ENCODE measurements at regions of chr18 and their contacts with region 1.

Region 1: GRCh38 chr18:79588636-79589481 is 90.7 kb upstream of the CTDP1 start:
- DNase-seq: peak; percentile 96 to 98
- H3K4me3 ChIP-seq: peak overlapping the region; percentile 6 to 22
- H3K27ac ChIP-seq: peak overlapping the region; percentile 87 to 90
- H3K4me1 ChIP-seq: peaks cover 0 to 46% (median 39%) of the 10 kb centered on the region in 4 donors
- H3K27me3 ChIP-seq: no peaks in the 10 kb centered on the region
- CTCF ChIP-seq: peak; percentile 26 to 50

Region 2: DNA sequence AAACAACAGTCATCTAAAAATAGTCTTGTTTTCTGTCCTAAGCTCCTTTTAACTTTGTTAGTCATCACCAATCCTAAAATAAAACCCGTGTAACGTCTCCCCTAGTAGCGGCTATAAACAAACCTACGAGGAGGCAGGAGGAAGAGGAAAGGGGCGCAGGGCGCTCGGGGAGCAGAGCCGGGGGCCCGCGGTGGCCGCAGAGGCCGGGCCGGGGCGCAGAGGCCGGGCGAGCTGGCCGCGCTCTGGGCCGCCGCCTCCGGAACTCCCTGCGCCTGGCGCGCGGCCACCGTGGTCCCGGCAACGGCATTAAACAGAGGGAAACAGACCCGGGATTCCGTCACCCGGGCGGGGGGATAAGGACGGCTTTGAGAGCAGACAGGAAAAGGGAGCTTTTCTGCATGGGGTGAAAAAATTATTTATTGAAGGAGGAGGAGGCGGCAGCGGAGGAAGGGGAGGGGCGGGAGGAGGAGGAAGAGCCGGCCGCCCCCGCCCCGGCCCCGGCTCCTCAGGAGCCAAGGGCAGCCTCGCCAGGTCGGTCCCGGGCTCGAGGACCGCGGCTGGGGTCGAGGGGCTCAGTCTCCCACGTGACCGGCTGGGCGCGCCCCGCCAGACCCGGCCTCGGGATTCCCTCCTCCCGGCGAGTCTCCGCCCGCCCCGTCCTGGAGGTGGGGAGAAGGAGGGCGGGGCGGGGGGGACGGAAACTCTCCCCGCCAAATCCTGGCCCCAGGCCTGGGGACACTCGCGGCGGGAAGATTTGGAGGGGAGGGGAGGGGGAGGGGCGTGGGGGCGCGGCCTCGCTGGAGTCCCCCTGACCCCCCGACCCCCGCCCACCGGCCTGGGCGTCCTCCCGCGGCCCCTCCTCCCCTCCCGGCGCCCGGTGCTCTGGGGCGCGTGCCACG is 195.0 kb before region 1 on chr18:
- intact Hi-C with region 1: loop called (anchors 5 kb)
- DNase-seq: peak; percentile 93 to 94
- H3K4me3 ChIP-seq: peak overlapping the region; percentile 60 to 69
- H3K27ac ChIP-seq: peak overlapping the region; percentile 95 to 97
- H3K4me1 ChIP-seq: peaks cover 0 to 31% (median 27%) of the 10 kb centered on the region in 4 donors
- H3K27me3 ChIP-seq: peaks cover 0 to 7% of the 10 kb centered on the region in 2 donors
- CTCF ChIP-seq: no peak

Region 3: DNA sequence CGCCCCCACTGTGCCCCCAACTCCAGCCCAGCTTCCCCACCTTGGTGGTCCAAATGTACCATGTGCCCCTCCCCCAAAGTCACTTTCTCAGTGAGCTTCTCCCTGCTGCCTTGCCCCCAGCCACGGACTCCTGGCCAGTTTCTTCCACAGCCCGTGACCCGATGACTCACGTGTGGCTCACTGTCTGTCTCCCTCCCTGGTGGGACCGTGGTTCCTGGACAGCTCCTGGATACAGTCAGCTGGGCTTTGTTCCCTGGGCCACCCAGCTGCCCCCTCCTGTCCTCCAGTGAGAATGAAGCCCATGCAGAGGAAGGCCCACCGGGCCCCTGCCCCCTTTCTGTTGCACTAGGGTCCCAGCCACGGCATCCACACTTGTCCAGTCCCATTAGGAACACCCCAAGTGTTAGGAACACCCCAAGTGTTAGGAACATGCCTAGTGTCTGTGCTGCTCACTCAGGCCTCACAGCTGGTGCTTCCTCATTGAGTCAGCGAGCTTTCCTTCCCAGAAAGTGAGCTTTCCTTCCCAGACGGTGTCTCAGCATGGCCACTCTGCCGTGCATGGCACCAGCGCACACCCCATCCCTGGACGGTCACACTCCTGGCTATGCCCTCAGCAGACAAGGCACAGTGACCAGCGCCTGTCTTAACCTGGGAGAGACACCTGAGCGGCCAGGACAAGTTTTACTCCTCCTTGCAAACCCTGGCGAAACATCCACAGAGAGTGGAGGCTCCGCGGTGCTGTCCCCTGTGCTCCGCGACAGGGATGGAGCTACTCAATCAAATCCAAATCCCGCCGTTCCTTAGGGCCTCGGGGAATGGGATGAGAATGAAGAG is 46.0 kb after region 1 on chr18:
- intact Hi-C with region 1: loop called (anchors 5 kb)
- DNase-seq: peak in 1 of 2 donors; percentile 58
- H3K4me3 ChIP-seq: no peak overlapping the region
- H3K27ac ChIP-seq: no peak overlapping the region
- H3K4me1 ChIP-seq: peaks cover 0 to 21% (median 14%) of the 10 kb centered on the region in 4 donors
- H3K27me3 ChIP-seq: no peaks in the 10 kb centered on the region
- CTCF ChIP-seq: no peak